T-cell (primary cell): ENCODE measurements at regions of chr20 and their contacts with region 1.

Region 1: GRCh38 chr20:49668181-49668877 is 45.3 kb downstream of the B4GALT5 start:
- DNase-seq: peak; percentile 23 to 93 (median 80)
- ATAC-seq: peak; percentile 64 to 89 (median 79)
- H3K4me3 ChIP-seq: peak overlapping the region in 1 of 2 donors; percentile 48
- H3K4me3 Mint-ChIP-seq: peak overlapping the region; percentile 62 to 73 (median 72)
- H3K27ac ChIP-seq: peak overlapping the region; percentile 72
- H3K27ac Mint-ChIP-seq: peak overlapping the region; percentile 62 to 69
- H3K4me1 ChIP-seq: peaks cover 4 to 25% of the 10 kb centered on the region in 2 experiments
- H3K4me1 Mint-ChIP-seq: peaks cover 42 to 71% (median 46%) of the 10 kb centered on the region in 3 donors
- H3K27me3 ChIP-seq: no peaks in the 10 kb centered on the region
- H3K27me3 Mint-ChIP-seq: no peaks in the 10 kb centered on the region

Region 2: DNA sequence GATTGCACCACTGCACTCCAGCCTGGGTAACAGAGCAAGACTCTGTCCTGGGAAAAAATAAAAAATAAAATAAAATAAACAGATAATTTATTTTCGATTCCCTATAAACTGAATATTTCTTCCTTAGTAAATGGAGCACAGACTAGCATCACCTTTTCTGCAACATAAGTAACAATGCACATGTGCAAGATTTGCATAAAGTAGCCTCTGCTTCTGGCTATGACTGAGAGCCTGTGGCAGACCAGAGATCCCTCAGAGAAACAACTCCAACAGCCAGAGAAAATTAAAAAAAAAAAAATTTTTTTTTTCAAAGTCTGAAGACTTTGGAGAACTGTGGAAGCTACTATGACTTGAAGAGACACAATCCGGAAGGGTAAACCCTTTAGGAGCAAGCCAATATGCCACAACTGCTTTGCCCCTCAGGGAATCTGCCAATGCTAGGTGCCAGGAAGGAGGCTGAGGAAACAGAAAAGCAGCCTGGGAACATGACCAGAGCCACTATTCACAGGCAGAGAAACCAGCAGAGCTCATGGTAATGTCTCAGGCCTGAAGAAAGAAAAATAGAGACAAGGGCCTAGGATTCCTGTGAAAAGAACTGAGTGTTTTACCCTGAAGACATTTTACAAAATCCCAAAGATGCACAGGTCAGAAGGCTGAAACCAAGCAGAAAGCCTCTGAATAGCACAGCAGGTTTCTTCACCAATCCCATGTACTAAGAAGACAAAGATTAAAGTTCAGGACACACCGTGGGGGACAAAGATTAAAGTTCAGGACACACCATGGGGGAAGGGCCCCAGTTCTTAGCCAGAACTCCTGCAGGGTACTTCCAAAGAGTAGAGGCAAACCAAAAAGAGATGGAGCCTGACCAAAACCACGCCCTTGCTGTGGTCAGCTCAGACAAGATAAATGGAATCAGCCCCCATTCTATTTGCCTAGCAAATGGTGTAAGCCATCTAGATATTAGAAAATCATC is 19.6 kb after region 1 on chr20:
- CTCF ChIA-PET with region 1: interaction called in 1 of 2 experiments, 5 read pairs
- POLR2A ChIA-PET with region 1: interaction called in 1 of 2 experiments, 13 read pairs
- DNase-seq: no peak
- ATAC-seq: no peak
- H3K4me3 ChIP-seq: no peak overlapping the region
- H3K4me3 Mint-ChIP-seq: no peak overlapping the region
- H3K27ac ChIP-seq: no peak overlapping the region
- H3K27ac Mint-ChIP-seq: no peak overlapping the region
- H3K4me1 ChIP-seq: peaks cover 0 to 7% of the 10 kb centered on the region in 2 experiments
- H3K4me1 Mint-ChIP-seq: peaks cover 13 to 46% (median 22%) of the 10 kb centered on the region in 3 donors
- H3K27me3 ChIP-seq: no peaks in the 10 kb centered on the region
- H3K27me3 Mint-ChIP-seq: no peaks in the 10 kb centered on the region